Activated CD4-positive, alpha-beta T cell treated with anti-CD3 and anti-CD28 coated beads for 36 hours (primary cell): ENCODE measurements at regions of chr1 and their contacts with region 1.

Region 1: DNA sequence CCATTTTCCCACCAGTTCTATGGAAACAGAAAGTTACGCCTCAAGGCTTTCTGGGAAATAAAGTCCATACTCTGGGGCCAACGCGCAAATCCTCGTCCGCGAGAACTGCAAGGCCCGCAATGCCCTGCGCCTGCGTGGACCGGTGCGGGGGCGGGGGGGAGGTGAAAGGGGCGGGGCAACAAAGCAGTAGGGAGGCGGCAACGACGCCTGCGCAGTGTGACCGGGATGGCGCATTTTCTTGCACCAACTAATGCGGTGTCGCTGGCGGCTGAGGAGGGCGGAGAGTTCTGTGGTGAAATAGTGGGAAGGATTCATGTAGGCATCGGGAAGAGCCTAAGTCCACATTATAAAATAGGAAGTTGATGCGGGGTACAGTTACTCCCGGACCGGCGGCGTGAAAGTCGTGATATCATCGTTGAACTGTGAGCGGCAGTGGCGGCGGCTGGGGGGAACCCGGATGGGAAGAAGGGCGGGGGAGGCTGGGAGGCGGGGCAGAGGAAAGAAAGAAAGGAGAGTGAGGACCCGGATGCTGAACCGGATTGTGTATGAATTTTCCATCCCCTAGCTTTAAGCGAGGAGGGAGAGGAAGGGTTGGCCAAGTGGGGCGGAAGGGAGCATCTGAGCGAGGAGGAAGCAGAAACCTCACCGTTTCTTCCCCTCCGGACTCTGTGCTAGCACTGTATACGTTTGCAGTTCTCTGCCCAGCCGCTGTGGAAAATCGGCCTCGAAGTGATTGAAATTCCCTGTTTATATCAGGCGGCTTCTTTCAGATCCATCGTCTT is at the start of gene GGPS1:
- DNase-seq: peak; percentile 99
- ATAC-seq: peak; percentile 84
- H3K4me3 Mint-ChIP-seq: no peak within 1 kb of the TSS
- H3K27ac Mint-ChIP-seq: no peak within 1 kb of the TSS
- H3K4me1 Mint-ChIP-seq: peaks cover 42% of the 10 kb centered on the region
- H3K27me3 Mint-ChIP-seq: no peaks in the 10 kb centered on the region
- total RNA-seq, gene GGPS1: 35.6 to 37.4 TPM

Region 2: GRCh38 chr1:234373064-234373958 is 955.2 kb before region 1 on chr1 and contains the start of gene COA6:
- CTCF ChIA-PET with region 1: no interaction called
- POLR2A ChIA-PET with region 1: no interaction called
- intact Hi-C with region 1: loop called in 1 of 2 experiments (anchors 1 kb)
- DNase-seq: peak; percentile 92
- ATAC-seq: peak; percentile 89
- H3K4me3 Mint-ChIP-seq: peak within 1 kb of the TSS; percentile 98
- H3K27ac Mint-ChIP-seq: peak within 1 kb of the TSS; percentile 99
- H3K4me1 Mint-ChIP-seq: peaks cover 56% of the 10 kb centered on the region
- H3K27me3 Mint-ChIP-seq: no peaks in the 10 kb centered on the region
- total RNA-seq, gene COA6: 56.5 to 69.5 TPM

Region 3: GRCh38 chr1:234978397-234979295 is 349.9 kb before region 1 on chr1:
- CTCF ChIA-PET with region 1: no interaction called
- POLR2A ChIA-PET with region 1: no interaction called
- intact Hi-C with region 1: no loop called
- DNase-seq: peak; percentile 80
- ATAC-seq: peak; percentile 62
- H3K4me3 Mint-ChIP-seq: peak overlapping the region; percentile 75
- H3K27ac Mint-ChIP-seq: peak overlapping the region; percentile 98
- H3K4me1 Mint-ChIP-seq: peaks cover 66% of the 10 kb centered on the region
- H3K27me3 Mint-ChIP-seq: no peaks in the 10 kb centered on the region

Region 4: DNA sequence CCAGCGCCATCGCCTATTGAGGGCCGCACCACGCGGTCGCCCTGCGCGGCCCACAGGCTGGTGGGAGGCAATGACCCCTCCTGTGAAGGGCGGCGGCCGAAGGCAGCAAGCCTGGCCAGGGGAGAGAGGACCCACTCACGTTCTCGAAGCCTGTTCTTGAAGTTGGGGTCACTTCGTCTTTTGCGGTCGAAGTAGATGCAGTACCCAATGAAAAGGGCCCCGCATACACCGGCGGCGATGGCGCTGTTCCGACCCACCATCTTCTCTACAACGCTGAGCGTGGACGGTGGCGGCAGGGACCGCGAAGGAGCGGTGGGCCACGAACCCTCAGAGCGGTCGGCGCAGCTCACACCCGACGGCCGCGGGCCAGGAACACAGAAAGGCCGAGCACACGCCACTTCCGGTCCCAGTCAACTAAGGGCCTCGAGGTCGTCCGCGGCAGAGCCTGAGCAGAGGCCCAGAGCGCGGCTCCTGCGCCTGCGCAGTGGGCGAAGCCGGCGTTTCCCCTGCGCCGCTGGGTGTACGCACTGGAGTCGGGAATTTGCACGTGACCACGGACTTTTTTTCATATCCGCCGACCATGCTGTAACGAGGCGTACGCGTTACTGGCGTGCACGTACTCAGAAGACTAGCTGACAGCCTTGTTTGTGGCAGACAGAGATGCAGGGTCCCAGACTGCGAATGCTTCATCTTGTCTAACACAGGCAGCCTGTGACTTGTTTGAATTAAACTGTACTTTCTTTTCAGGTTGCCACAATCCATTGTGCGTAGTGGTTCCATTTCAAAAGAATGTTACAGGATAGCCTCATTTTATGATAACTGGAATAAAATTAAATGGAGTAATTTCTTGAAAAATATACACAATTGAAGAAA is 199.9 kb before region 1 on chr1 and contains the start of gene TOMM20:
- CTCF ChIA-PET with region 1: no interaction called
- POLR2A ChIA-PET with region 1: interaction called, 4 read pairs
- intact Hi-C with region 1: loop called (anchors 1 kb)
- DNase-seq: peak; percentile 97
- ATAC-seq: peak; percentile 92
- H3K4me3 Mint-ChIP-seq: peak within 1 kb of the TSS; percentile 90
- H3K27ac Mint-ChIP-seq: peak within 1 kb of the TSS; percentile 98
- H3K4me1 Mint-ChIP-seq: peaks cover 41% of the 10 kb centered on the region
- H3K27me3 Mint-ChIP-seq: no peaks in the 10 kb centered on the region
- total RNA-seq, gene TOMM20: 62.1 to 148 TPM

Region 5: DNA sequence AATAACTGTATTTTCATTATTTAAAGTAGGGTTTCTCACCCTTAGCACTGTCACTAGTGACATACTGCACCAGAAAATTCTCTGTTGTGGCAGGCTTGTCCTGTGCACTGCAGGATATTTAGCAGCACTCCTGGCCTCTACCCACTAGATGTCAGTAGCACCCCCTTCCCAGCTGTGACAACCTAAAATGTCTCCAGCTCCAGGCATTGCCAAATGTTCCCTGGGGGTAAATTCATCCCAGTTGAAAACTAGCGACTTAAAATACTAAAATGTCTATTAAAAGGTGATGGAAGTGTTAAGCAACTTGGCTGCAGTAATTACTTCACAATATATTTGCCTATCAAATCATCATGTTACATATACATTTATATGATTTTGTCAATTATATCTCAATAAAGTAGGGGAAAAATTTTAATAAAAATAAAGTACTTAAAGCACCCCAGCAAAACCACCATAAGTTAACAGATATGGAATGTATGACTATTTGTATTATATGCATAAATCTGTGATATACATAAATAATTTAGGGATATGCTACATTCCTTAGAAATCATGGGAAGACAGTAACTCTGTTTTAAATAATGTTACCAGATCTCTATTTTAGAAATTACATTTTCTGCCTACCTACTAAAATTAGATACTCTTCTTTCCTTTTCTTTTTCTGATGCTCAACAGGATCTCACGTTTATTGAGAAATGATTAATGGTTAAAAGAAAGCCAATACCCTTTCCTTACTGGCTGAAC is 75.2 kb before region 1 on chr1:
- CTCF ChIA-PET with region 1: interaction called, 4 read pairs
- POLR2A ChIA-PET with region 1: no interaction called
- intact Hi-C with region 1: loop called (anchors 1 kb)
- DNase-seq: peak; percentile 78
- ATAC-seq: peak; percentile 99
- H3K4me3 Mint-ChIP-seq: no peak overlapping the region
- H3K27ac Mint-ChIP-seq: no peak overlapping the region
- H3K4me1 Mint-ChIP-seq: peaks cover 31% of the 10 kb centered on the region
- H3K27me3 Mint-ChIP-seq: no peaks in the 10 kb centered on the region

Region 6: DNA sequence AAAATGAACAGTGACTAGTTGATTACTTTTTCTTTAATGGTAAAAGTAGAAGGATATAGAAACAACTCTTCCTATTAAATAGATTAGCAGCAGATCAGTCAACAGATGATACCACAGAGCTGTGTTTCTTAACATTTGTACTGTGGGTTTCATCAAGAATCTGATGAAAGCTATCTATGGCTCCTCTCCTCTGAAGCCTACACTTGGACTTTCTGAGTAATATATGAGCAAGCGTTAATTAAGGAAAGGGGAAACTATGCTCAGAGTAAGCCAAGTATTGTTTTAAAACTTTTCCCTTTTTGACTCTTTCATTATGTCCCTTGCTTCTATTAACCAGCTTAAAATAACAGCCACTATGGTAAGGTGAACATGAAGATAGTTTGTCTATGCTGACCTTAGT is 11.4 kb before region 1 on chr1:
- CTCF ChIA-PET with region 1: interaction called, 13 read pairs
- POLR2A ChIA-PET with region 1: interaction called, 9 read pairs
- intact Hi-C with region 1: loop called in 1 of 2 experiments (anchors 1 kb)
- DNase-seq: no peak
- ATAC-seq: peak; percentile 75
- H3K4me3 Mint-ChIP-seq: no peak overlapping the region
- H3K27ac Mint-ChIP-seq: peak overlapping the region; percentile 84
- H3K4me1 Mint-ChIP-seq: peaks cover 76% of the 10 kb centered on the region
- H3K27me3 Mint-ChIP-seq: no peaks in the 10 kb centered on the region

Region 7: DNA sequence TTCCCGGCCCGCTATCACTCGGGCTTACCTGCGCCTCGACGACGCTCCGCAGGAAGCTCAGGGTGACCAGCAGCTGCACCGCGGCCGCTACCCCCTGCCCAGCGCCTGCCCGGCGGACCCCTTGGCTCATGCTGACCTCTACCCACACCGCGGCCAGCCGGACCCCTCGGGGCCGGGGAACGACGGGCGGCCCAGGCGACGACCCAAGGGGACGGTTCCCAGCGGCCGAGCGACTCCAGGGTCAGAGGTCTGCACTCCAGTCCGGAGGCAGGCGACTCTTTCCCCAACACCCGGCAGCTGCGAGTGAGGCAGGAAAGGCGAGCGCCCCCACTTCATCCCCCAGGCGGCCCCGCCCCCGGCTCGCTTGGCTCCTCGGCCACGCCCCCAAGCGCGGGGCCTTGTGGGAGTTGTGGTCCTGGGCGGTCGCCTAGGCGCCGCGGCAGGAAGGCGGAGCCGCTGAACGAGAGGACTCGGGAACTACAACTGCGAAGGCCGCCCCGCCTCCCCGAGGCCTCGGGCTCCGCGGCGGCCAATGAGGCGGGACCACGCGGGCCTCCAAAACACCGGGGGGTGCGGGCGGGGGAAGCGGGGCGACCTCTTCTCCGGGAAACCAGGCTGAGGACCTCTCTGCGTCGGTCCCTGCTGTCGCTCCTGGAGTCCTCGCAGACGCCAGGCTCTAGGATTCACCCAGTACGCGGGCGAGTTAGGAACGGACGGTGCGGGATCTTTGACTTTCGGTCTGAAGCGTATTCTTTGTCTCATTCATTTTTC is 953.3 kb after region 1 on chr1 and contains the start of gene ERO1B:
- CTCF ChIA-PET with region 1: no interaction called
- POLR2A ChIA-PET with region 1: no interaction called
- intact Hi-C with region 1: loop called in 1 of 2 experiments (anchors 5 kb)
- DNase-seq: peak; percentile 98
- ATAC-seq: peak; percentile 86
- H3K4me3 Mint-ChIP-seq: peak within 1 kb of the TSS; percentile 82
- H3K27ac Mint-ChIP-seq: peak within 1 kb of the TSS; percentile 70
- H3K4me1 Mint-ChIP-seq: peaks cover 47% of the 10 kb centered on the region
- H3K27me3 Mint-ChIP-seq: peaks cover 1% of the 10 kb centered on the region
- total RNA-seq, gene ERO1B: 2.2 to 2.8 TPM